Activated naive CD4-positive, alpha-beta T cell treated with anti-CD3 and anti-CD28 coated beads for 36 hours (primary cell): ENCODE measurements at regions of chr10 and their contacts with region 1.

Region 1: GRCh38 chr10:97292097-97292862 is at the start of gene ARHGAP19:
- DNase-seq: peak; percentile 98
- H3K4me3 Mint-ChIP-seq: peak within 1 kb of the TSS; percentile 91
- H3K27ac Mint-ChIP-seq: peak within 1 kb of the TSS; percentile 88
- H3K4me1 Mint-ChIP-seq: peaks cover 23% of the 10 kb centered on the region
- H3K27me3 Mint-ChIP-seq: no peaks in the 10 kb centered on the region
- total RNA-seq, gene ARHGAP19: 76.7 to 91.9 TPM

Region 2: GRCh38 chr10:96632974-96633710 is 659.1 kb before region 1 on chr10:
- CTCF ChIA-PET with region 1: no interaction called
- intact Hi-C with region 1: no loop called
- DNase-seq: no peak
- H3K4me3 Mint-ChIP-seq: no peak overlapping the region
- H3K27ac Mint-ChIP-seq: no peak overlapping the region
- H3K4me1 Mint-ChIP-seq: no peaks in the 10 kb centered on the region
- H3K27me3 Mint-ChIP-seq: no peaks in the 10 kb centered on the region

Region 3: DNA sequence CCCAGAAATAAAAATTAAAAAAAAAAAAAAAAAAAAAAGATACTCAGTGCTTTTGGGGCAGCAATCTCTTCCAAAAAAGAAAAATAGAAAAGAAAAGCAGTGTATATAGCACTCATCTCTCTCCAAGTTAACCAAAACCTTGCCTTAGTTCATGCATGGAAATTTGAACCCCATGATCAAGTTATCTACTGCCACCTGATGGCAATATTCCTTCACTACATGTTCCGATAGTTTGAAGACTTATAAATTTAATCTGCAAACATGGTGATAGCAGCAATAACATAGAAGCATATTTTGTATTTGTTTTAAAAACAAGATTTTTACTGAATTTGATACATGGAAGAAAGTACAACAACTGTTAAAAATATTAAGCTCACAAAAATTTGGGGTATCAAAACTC is 57.9 kb before region 1 on chr10:
- CTCF ChIA-PET with region 1: no interaction called
- intact Hi-C with region 1: loop called (anchors 2 kb)
- DNase-seq: no peak
- H3K4me3 Mint-ChIP-seq: no peak overlapping the region
- H3K27ac Mint-ChIP-seq: no peak overlapping the region
- H3K4me1 Mint-ChIP-seq: peaks cover 19% of the 10 kb centered on the region
- H3K27me3 Mint-ChIP-seq: no peaks in the 10 kb centered on the region

Region 4: GRCh38 chr10:97400665-97401454 is 108.6 kb after region 1 on chr10 and contains the start of gene RRP12:
- CTCF ChIA-PET with region 1: no interaction called
- intact Hi-C with region 1: loop called (anchors 1 kb)
- DNase-seq: peak; percentile 92
- H3K4me3 Mint-ChIP-seq: peak within 1 kb of the TSS; percentile 92
- H3K27ac Mint-ChIP-seq: peak within 1 kb of the TSS; percentile 83
- H3K4me1 Mint-ChIP-seq: peaks cover 15% of the 10 kb centered on the region
- H3K27me3 Mint-ChIP-seq: no peaks in the 10 kb centered on the region
- total RNA-seq, gene RRP12: 51.0 to 55.2 TPM

Region 5: DNA sequence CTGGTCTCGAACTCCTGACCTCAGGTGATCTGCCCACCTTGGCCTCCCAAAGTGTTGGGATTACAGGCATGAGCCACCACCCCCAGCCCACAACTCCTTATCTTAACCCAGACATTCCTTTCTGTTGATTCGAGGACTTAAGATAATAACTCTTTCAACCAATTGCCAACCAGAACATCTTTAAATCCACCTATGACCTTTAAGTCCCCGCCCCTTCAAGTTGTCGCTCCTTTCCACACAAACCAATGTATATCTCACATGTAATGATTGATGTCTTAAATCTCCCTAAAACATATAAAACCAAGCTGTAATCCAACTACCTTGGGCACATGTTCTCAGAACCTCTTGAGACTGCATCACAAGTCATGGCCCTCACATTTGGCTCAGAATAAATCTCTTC is 272.5 kb after region 1 on chr10:
- CTCF ChIA-PET with region 1: no interaction called
- intact Hi-C with region 1: no loop called
- DNase-seq: no peak
- H3K4me3 Mint-ChIP-seq: no peak overlapping the region
- H3K27ac Mint-ChIP-seq: no peak overlapping the region
- H3K4me1 Mint-ChIP-seq: no peaks in the 10 kb centered on the region
- H3K27me3 Mint-ChIP-seq: no peaks in the 10 kb centered on the region

Region 6: GRCh38 chr10:97640174-97640867 is 348.0 kb after region 1 on chr10 and contains the start of gene PI4K2A:
- CTCF ChIA-PET with region 1: no interaction called
- intact Hi-C with region 1: loop called (anchors 1 kb)
- DNase-seq: peak; percentile 100
- H3K4me3 Mint-ChIP-seq: peak within 1 kb of the TSS; percentile 93
- H3K27ac Mint-ChIP-seq: peak within 1 kb of the TSS; percentile 73
- H3K4me1 Mint-ChIP-seq: peaks cover 18% of the 10 kb centered on the region
- H3K27me3 Mint-ChIP-seq: no peaks in the 10 kb centered on the region
- total RNA-seq, gene PI4K2A: 8.9 to 9.4 TPM